Gastrocnemius medialis (tissue), 4 donors: ENCODE measurements at regions of chr1 and their contacts with region 1.

Region 1: GRCh38 chr1:19113697-19114092 is 96.4 kb downstream of the UBR4 start:
- DNase-seq: no peak
- ATAC-seq: no peak
- H3K4me3 ChIP-seq: no peak overlapping the region
- H3K27ac ChIP-seq: no peak overlapping the region
- H3K4me1 ChIP-seq: no peaks in the 10 kb centered on the region
- H3K27me3 ChIP-seq: no peaks in the 10 kb centered on the region
- CTCF ChIP-seq: peak in 1 of 5 experiments; percentile 25
- POLR2A ChIP-seq: no peak

Region 2: DNA sequence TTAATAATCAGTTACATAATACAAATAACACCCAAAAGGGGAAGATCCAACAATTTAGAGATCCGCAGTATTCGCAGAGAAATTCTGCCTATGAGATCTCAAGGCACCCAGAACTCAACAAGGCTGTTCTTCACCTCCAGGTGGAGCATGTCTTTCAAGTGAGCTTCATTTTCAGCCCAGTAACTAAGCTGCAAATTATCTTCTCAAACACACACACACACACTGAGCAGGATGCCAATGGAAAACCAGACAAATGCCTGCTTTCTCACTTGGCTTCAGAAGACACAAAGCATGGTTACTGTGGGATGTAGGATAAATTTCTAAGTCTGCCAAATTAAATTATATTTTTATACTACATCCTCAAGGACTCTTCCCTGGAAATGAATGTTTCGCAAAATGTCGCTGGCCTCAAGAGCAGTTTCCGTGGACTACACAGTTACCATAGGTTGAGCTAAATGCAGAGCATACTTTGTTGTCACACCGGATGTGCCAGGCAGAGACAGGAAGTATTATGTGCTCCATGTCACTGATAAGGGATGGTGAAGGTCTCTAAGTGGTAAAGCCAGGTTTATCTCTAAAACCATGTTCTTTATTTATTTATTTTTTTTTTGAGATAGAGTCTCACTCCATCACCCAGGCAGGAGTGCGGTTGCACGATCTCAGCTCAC is 66.0 kb after region 1 on chr1:
- in situ Hi-C with region 1: no loop called
- intact Hi-C with region 1: loop called (anchors 10 kb)
- DNase-seq: no peak
- ATAC-seq: no peak
- H3K4me3 ChIP-seq: no peak overlapping the region
- H3K27ac ChIP-seq: no peak overlapping the region
- H3K4me1 ChIP-seq: no peaks in the 10 kb centered on the region
- H3K27me3 ChIP-seq: no peaks in the 10 kb centered on the region
- CTCF ChIP-seq: peak in 1 of 5 experiments; percentile 13
- POLR2A ChIP-seq: no peak

Region 3: DNA sequence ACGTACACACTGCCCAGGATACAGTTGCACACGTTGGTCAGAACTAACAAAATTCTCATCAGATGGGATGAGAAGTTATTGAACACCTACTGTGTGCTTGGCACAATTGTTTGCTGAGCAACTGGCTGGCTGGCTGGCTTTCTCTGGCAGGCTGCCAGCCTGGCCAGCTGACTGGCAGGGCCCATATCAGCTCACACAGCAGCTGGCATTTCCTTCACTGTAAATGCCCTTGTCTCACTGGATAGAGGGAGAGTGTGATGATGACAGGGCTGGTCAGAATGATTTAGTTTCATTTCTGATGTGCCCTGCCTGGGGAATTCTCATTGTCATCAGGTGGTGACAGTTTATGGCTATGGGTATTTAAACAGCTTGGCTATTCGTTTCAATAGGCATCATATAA is 1356.5 kb after region 1 on chr1:
- in situ Hi-C with region 1: no loop called
- intact Hi-C with region 1: no loop called
- DNase-seq: no peak
- ATAC-seq: no peak
- H3K4me3 ChIP-seq: no peak overlapping the region
- H3K27ac ChIP-seq: no peak overlapping the region
- H3K4me1 ChIP-seq: no peaks in the 10 kb centered on the region
- H3K27me3 ChIP-seq: peaks cover 0 to 2% (median 0%) of the 10 kb centered on the region in 3 donors
- CTCF ChIP-seq: no peak
- POLR2A ChIP-seq: no peak